HEK293 (cell line): ENCODE measurements at regions of chr15 and their contacts with region 1.

Region 1: GRCh38 chr15:65400760-65401610 is 21.8 kb downstream of the IGDCC4 start:
- H3K4me3 ChIP-seq: no peak overlapping the region
- H3K27ac ChIP-seq: peak overlapping the region; percentile 36; the same call in 1 of the 2 replicates
- H3K4me1 ChIP-seq: peaks cover 12% of the 10 kb centered on the region
- CTCF ChIP-seq: peak; percentile 92

Region 2: GRCh38 chr15:65384895-65385858 is 15.8 kb before region 1 on chr15:
- CTCF ChIA-PET with region 1: interaction called, 53 read pairs
- POLR2A ChIA-PET with region 1: interaction called, 4 read pairs
- H3K4me3 ChIP-seq: no peak overlapping the region
- H3K27ac ChIP-seq: peak overlapping the region; percentile 38; the same call in 1 of the 2 replicates
- H3K4me1 ChIP-seq: peaks cover 17% of the 10 kb centered on the region
- CTCF ChIP-seq: peak; percentile 97

Region 3: GRCh38 chr15:65421360-65422070 is 20.5 kb after region 1 on chr15:
- CTCF ChIA-PET with region 1: interaction called, 27 read pairs
- POLR2A ChIA-PET with region 1: interaction called, 4 read pairs
- H3K4me3 ChIP-seq: peak overlapping the region; percentile 59
- H3K27ac ChIP-seq: peak overlapping the region; percentile 86
- H3K4me1 ChIP-seq: peaks cover 18% of the 10 kb centered on the region
- CTCF ChIP-seq: no peak

Region 4: DNA sequence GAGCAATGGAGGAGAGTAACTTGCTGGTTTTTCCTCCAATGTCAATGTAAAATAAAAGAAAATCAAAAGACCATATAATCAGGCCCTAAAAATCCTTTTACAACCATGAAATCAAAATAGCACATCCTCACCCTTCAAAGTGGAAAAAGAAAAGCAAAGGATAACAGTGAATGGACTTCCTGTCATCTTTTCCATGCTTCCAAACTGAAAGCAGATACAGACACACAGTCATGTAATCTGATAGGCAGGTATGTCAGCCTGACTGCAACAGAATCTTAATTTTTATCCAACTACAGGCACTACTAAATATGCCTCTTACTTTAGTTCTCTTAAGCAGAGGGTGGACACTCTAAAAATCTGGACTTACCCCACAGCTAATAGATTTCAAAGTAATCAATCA is 49.6 kb after region 1 on chr15:
- CTCF ChIA-PET with region 1: interaction called, 10 read pairs
- POLR2A ChIA-PET with region 1: no interaction called
- H3K4me3 ChIP-seq: no peak overlapping the region
- H3K27ac ChIP-seq: no peak overlapping the region
- H3K4me1 ChIP-seq: no peaks in the 10 kb centered on the region
- CTCF ChIP-seq: no peak

Region 5: GRCh38 chr15:65743637-65744252 is 342.8 kb after region 1 on chr15:
- CTCF ChIA-PET with region 1: no interaction called
- POLR2A ChIA-PET with region 1: no interaction called
- H3K4me3 ChIP-seq: no peak overlapping the region
- H3K27ac ChIP-seq: no peak overlapping the region
- H3K4me1 ChIP-seq: peaks cover 16% of the 10 kb centered on the region
- CTCF ChIP-seq: no peak